ENCODE measurements at regions of chr11 and their contacts with region 1.

Region 1: GRCh38 chr11:8948886-8949285 is 6.1 kb upstream of the ASCL3 start:
- DNase-seq: no peak
- ATAC-seq: no peak
- H3K4me3 ChIP-seq: no peak overlapping the region
- H3K27ac ChIP-seq: no peak overlapping the region
- H3K4me1 ChIP-seq: no peaks in the 10 kb centered on the region
- H3K27me3 ChIP-seq: no peaks in the 10 kb centered on the region
- CTCF ChIP-seq: no peak
- POLR2A ChIP-seq: no peak

Region 2: DNA sequence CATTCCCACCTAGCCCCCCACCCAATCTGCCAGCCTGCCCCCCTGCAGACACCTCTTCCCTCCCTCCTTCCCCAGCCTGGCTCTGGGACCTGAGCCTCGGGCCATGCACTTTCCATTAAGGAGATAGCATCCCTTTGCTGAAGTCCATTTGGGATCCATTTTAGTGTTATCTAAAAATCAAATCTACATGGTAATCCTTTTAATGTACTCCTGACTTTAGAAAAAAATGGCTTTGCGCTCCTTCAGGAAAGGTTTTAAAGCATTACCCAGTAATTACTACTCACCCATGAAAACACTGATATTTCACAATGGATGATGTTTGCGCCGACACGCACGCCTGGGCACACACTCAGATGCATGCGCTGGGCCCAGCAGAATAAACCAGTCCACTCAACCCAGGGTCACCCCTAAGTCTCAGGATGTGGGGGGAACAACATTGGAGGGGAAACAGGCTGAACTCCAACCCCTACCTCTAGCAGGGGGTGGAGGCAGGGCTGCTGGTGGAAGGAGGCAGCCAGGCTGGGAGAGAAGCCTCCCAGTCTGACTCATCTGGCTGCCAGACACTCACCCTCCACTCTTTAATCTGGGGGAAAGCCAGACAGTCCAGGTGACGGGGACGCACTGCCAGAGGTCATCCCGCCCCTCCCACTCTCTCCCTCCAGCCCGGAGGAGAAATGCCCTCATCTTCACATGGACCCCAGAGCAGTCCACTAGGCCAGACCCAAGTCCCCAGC is 715.0 kb before region 1 on chr11:
- intact Hi-C with region 1: loop called in 1 of 10 experiments (anchors 10 kb)
- DNase-seq: peak in 3 of 5 donors; percentile 25 to 58 (median 47)
- ATAC-seq: peak; percentile 24 to 76 (median 66)
- H3K4me3 ChIP-seq: no peak overlapping the region
- H3K27ac ChIP-seq: peak overlapping the region in 3 of 12 donors; percentile 46 to 57 (median 51)
- H3K4me1 ChIP-seq: peaks cover 0 to 29% (median 4%) of the 10 kb centered on the region in 12 donors
- H3K27me3 ChIP-seq: no peaks in the 10 kb centered on the region
- CTCF ChIP-seq: no peak
- POLR2A ChIP-seq: no peak

Region 3: GRCh38 chr11:9347100-9347499 is 398.2 kb after region 1 on chr11:
- intact Hi-C with region 1: no loop called
- DNase-seq: no peak
- ATAC-seq: no peak
- H3K4me3 ChIP-seq: no peak overlapping the region
- H3K27ac ChIP-seq: no peak overlapping the region
- H3K4me1 ChIP-seq: no peaks in the 10 kb centered on the region
- H3K27me3 ChIP-seq: no peaks in the 10 kb centered on the region
- CTCF ChIP-seq: no peak
- POLR2A ChIP-seq: no peak

Measured in heart left ventricle (tissue), 16 donors.